ENCODE measurements at regions of chr19 and their contacts with region 1.

Region 1: GRCh38 chr19:17932485-17933338 is at the start of gene CCDC124:
- DNase-seq: peak; percentile 91 to 94
- H3K4me3 ChIP-seq: peak within 1 kb of the TSS; percentile 61
- H3K4me3 Mint-ChIP-seq: peak within 1 kb of the TSS; percentile 95
- H3K27ac Mint-ChIP-seq: peak within 1 kb of the TSS; percentile 98
- H3K4me1 ChIP-seq: 0 out of 2 replicates have a peak, but pooled peaks cover 8% of the 10 kb centered on the region
- H3K4me1 Mint-ChIP-seq: peaks cover 6% of the 10 kb centered on the region
- H3K27me3 ChIP-seq: no peaks in the 10 kb centered on the region
- H3K27me3 Mint-ChIP-seq: no peaks in the 10 kb centered on the region
- CTCF ChIP-seq: peak; percentile 85 to 96
- total RNA-seq, gene CCDC124: 73.3 TPM in 2 replicates

Region 2: DNA sequence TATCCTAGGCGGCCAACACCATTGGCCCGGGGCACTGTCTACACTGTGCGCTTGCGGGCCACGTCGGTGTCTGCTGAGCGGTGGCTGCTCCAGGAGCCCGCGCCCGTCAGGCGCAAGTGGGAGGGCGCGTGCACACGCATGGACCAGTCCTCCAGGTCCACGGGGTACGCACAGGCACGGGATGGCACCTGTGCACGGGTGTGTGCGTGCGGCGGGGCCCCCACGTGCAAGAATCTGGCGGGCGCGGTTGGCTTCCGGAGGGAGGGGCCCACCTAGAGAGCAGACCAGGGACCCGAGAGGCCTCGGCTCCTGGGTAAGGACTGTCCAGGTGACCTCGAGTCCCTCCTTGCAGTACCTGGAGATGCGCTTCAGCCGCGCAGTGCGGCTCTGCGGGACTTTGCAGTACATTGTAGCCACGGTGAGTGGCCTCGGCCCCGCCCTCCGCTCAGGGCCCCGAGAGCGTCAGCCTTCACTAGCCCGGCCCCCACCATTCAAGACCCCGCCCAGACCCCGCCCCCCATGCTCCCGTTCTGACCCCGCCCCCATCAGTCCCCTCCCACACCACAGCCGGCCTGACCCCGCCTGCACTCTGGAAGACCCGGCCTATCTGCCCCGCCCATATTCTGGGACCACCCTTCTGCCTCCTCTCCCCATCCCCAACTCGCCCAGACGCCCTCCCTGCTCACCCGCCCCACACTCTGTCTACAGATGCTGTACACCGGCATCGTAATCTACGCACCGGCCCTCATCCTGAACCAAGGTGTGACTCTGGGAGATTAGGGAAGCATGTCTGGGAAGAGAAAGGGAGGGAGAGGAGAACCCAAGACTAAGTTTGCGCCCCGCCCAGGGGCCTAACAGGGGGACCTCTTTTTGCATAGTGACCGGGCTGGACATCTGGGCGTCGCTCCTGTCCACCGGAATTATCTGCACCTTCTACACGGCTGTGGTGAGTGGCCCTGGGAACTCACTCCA is 58.6 kb before region 1 on chr19:
- CTCF ChIA-PET with region 1: interaction called, 13 read pairs
- POLR2A ChIA-PET with region 1: no interaction called
- intact Hi-C with region 1: loop called (anchors 1 kb)
- DNase-seq: peak; percentile 67 to 77
- H3K4me3 ChIP-seq: peak overlapping the region; percentile 44
- H3K4me3 Mint-ChIP-seq: peak overlapping the region; percentile 64
- H3K27ac Mint-ChIP-seq: no peak overlapping the region
- H3K4me1 ChIP-seq: no peaks in the 10 kb centered on the region
- H3K4me1 Mint-ChIP-seq: no peaks in the 10 kb centered on the region
- H3K27me3 ChIP-seq: no peaks in the 10 kb centered on the region
- H3K27me3 Mint-ChIP-seq: no peaks in the 10 kb centered on the region
- CTCF ChIP-seq: no peak

Region 3: DNA sequence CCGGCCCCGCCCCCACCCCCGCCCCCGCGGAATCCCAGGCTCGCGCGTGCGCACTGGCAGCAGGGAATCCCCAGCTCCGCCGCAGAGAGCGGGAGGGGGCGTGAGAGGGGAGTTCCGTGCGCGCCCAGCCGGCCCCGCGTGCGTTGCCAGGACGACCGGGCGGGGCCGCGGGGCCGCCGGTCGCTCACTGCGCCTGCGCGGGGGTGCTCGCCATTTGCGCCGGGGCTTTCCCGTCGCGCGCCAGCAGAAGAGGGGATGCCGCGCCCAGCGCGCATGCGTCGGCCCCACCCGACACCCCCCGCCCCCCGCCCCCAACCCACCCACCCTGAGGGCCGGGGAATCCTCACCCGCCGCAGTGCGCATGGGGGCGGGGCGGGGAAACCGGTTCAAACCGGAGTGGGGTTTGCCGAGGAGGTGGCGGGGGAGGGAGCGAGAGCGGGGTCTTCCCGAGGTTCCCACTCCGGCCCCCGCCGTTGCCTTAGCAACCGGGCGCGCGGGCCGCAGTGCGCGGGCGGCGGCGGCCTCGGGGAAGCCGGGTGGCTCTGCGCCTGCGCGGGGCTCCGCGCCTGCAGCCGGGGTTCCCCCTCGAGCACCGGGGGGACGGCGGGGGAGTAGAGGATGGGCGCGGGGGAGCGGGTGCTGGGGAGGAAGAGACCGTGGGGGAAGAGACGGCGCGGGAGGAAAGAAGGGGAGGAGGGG is 15.3 kb after region 1 on chr19:
- CTCF ChIA-PET with region 1: interaction called, 11 read pairs
- POLR2A ChIA-PET with region 1: interaction called, 3 read pairs
- intact Hi-C with region 1: no loop called
- DNase-seq: peak; percentile 92 to 96
- H3K4me3 ChIP-seq: peak overlapping the region; percentile 52
- H3K4me3 Mint-ChIP-seq: peak overlapping the region; percentile 87
- H3K27ac Mint-ChIP-seq: peak overlapping the region; percentile 87
- H3K4me1 ChIP-seq: peaks cover 17% of the 10 kb centered on the region
- H3K4me1 Mint-ChIP-seq: peaks cover 12% of the 10 kb centered on the region
- H3K27me3 ChIP-seq: peaks cover 3% of the 10 kb centered on the region
- H3K27me3 Mint-ChIP-seq: peaks cover 2% of the 10 kb centered on the region
- CTCF ChIP-seq: no peak

Measured in Caco-2 (cell line).